AG04449 (cell line): ENCODE measurements at regions of chr2 and their contacts with region 1.

Region 1: DNA sequence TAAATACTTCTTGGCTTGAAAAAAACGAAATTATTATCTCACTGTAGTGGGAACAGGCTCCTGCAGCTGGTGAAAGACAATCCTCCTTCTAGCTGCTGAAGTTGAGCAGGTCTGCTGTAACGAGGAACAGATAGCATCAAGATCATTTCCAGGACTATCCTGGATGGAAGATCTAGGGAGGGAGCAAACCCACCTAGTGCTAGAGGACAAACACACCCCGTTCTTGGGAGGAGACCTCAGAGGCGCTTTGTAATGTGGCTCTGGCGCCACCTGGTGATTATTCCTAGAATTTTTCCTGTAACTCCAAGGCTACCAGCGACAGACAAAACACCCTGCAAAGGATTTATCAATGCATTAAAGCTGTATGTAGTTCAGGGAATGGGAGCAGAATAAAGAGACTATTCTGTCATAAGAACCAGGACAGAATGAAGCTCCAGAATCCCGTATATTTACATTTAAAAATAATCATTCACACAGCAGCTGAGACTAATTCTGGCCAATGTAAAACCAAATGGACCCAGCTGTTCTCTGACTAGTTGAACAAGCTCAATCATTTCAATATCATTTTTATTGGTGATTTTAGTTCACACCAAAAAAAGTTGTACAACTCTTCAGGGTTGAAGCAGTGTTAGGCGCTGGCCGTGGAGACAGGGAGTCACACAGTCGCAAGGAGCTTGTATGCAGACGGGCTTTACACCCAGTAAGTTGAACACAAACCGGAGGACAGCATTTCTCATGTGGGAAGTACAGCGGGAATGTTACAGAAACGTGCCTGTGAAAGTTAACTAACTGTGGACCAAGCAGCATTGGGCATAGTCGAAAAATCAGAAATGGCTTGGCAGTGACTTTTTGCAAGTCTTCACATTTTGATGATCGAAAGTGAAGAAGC is 290.3 kb downstream of the TRIB2 start:
- DNase-seq: peak; percentile 7
- H3K4me3 ChIP-seq: no peak overlapping the region; the same call in 1 of the 2 replicates
- CTCF ChIP-seq: peak; percentile 70

Region 2: DNA sequence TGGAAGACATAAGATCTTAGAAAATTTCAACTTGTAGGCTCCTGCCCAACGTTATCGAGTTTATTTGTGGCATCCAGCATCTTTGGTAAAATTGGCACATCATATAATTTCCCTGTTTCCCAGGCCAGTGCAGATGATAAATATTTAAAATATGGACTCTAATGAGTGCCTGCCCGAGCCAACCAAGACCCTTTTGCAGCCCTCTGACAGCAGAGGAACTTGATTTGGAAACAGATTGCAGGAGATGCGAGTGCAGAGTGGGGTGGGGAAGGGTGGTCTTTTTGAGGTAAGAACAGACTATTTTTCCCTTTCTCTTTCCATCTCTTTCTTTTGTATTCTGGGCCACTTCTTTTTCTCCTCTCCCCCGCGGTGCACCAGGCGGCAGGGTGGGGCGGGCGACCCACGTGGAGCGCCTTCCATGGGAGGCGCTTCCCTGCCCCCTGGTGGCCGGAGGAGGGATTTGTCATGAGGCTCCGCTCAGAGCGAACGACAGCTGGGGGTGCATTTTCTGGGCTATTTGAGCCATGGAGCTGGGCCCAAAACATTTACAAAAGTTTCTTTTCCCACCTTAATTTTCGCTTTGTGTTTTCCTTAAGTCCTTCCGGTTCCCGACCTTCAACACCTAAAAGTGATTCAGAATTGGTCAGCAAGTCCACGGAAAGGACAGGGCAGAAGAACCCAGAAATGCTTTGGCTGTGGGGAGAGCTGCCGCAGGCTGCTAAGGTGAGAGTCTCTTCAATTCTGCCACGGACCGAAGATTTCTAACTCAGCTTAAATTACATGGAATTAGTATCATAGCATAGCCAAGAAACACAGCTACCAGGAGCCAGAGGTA is 1227.9 kb before region 1 on chr2:
- CTCF ChIA-PET with region 1: interaction called, 14 read pairs
- POLR2A ChIA-PET with region 1: no interaction called
- DNase-seq: no peak
- H3K4me3 ChIP-seq: no peak overlapping the region
- CTCF ChIP-seq: peak; percentile 93

Region 3: GRCh38 chr2:12702305-12703121 is 304.6 kb before region 1 on chr2:
- CTCF ChIA-PET with region 1: interaction called, 12 read pairs
- POLR2A ChIA-PET with region 1: no interaction called
- DNase-seq: no peak
- H3K4me3 ChIP-seq: no peak overlapping the region
- CTCF ChIP-seq: no peak

Region 4: GRCh38 chr2:12948961-12949353 is 58.1 kb before region 1 on chr2:
- CTCF ChIA-PET with region 1: interaction called, 11 read pairs
- POLR2A ChIA-PET with region 1: no interaction called
- DNase-seq: no peak
- H3K4me3 ChIP-seq: no peak overlapping the region
- CTCF ChIP-seq: no peak

Region 5: DNA sequence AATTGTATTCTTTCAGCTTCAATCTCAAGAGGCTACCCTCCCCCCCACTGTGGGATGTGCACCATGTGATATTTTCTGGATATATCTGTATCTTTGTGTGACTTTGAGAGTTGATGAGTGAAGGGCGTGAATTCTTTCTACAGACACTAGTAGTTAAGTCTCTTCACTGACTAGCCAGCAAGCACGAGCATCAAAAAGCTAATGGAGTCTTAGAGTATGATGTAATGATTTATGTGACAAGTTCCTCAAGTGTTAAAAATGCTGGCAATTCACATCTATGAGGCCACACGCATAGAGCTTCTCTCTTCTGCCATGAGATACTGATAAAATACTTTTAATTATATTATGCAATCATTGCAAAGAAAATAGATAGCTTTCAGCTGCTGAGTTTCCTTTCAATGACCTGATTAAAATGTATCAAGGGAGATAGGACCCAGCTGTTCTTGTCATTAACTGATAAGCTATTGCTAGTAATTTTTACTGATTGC is 14.4 kb after region 1 on chr2:
- CTCF ChIA-PET with region 1: interaction called, 10 read pairs
- POLR2A ChIA-PET with region 1: no interaction called
- DNase-seq: no peak
- H3K4me3 ChIP-seq: no peak overlapping the region
- CTCF ChIP-seq: no peak

Region 6: DNA sequence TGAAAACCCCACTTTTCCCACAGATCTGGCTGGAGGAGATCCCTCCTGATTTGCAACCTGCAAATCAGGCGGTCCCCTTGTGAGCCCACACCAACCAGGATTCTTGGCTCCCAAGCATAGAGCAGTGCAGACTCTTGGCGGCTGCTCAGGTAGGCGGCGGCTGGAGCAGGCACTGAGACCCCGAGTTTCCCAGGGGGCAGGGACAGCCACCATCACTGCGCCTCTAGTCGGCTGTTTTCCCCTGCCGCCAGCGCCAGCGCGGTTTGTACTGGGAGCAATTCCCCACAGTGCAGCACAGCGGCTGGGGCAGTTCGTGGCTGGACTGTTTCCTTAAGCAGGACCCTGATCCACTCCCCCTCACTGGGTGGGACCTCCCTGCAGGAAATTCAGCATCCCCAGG is 33.0 kb after region 1 on chr2:
- CTCF ChIA-PET with region 1: no interaction called
- POLR2A ChIA-PET with region 1: no interaction called
- DNase-seq: no peak
- H3K4me3 ChIP-seq: no peak overlapping the region
- CTCF ChIP-seq: no peak